ENCODE measurements at regions of chr7 and their contacts with region 1.

Region 1: GRCh38 chr7:55255496-55256435 is 109.4 kb upstream of the LANCL2 start:
- DNase-seq: peak; percentile 86 to 93 (median 90)
- H3K4me3 ChIP-seq: peak overlapping the region; percentile 61 to 72 (median 61)
- H3K27ac ChIP-seq: no peak overlapping the region
- H3K4me1 ChIP-seq: peaks cover 0 to 5% (median 0%) of the 10 kb centered on the region in 3 donors
- H3K27me3 ChIP-seq: peaks cover 5% of the 10 kb centered on the region
- CTCF ChIP-seq: peak; percentile 86

Region 2: GRCh38 chr7:54773472-54774399 is 482.0 kb before region 1 on chr7:
- intact Hi-C with region 1: loop called (anchors 5 kb)
- DNase-seq: peak; percentile 87 to 95 (median 90)
- H3K4me3 ChIP-seq: peak overlapping the region; percentile 46 to 66 (median 57)
- H3K27ac ChIP-seq: no peak overlapping the region
- H3K4me1 ChIP-seq: no peaks in the 10 kb centered on the region
- H3K27me3 ChIP-seq: no peaks in the 10 kb centered on the region
- CTCF ChIP-seq: peak; percentile 96

Region 3: DNA sequence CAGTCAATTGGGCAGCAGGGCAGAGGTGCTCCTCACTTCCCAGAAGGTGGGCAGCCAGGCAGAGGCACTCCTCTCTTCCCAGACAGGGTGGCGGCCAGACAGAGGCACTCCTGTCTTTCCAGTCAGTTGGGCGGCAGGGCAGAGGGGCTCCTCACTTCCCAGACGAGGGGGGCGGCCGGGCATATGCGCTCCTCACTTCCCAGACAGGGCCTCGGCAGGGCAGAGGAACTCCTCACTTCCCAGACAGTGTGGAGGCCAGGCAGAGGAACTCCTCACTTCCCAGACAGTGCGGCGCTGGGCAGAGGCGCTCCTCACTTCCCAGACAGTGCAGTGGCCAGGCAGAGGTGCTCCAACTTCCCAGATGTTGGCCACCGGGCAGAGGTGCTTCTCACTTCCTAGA is 463.4 kb before region 1 on chr7:
- intact Hi-C with region 1: loop called (anchors 5 kb)
- DNase-seq: no peak
- H3K4me3 ChIP-seq: no peak overlapping the region
- H3K27ac ChIP-seq: no peak overlapping the region
- H3K4me1 ChIP-seq: peaks cover 0 to 2% (median 2%) of the 10 kb centered on the region in 3 donors
- H3K27me3 ChIP-seq: no peaks in the 10 kb centered on the region
- CTCF ChIP-seq: no peak

Measured in kidney (tissue), 22 donors.